HCT116 (cell line): ENCODE measurements at regions of chr12 and their contacts with region 1.

Region 1: DNA sequence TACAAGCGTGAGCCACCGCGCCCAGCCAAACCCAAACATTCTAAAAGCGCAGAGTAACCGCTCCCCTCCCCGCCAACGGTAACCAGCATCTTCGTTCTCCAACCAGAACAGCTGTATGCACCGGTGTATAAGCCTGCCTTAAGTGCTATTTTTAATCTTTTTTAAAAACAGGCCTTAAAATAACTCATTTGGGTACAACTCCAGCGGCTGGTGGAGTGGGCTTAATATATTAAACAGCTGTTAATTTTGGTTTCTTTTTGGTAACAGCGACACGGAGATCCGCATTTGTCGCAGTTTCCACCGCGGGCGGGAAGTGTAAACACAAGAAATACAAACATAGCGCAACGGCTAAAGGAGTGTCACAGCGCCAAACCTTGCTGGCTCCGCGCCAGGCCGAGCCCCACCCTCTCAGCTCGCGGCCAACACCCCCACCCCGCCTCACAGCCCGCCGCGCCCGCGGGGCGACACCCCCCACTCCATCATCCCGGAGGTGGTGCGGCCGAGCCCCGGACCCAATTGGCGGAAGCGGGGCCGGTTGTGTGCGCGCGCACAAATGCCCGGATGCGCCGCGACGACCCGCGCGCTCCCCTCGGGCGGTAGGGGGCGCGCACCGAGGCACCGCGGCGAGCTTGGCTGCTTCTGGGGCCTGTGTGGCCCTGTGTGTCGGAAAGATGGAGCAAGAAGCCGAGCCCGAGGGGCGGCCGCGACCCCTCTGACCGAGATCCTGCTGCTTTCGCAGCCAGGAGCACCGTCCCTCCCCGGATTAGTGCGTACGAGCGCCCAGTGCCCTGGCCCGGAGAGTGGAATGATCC is at the start of gene MDM2:
- DNase-seq: peak; percentile 77
- ATAC-seq: peak; percentile 87
- H3K4me3 ChIP-seq: peak within 1 kb of the TSS; percentile 95 to 96
- H3K27ac ChIP-seq: peak within 1 kb of the TSS; percentile 99
- H3K4me1 ChIP-seq: peaks cover 6 to 31% of the 10 kb centered on the region in 2 experiments; a peak in 3 of 4 replicates
- H3K27me3 ChIP-seq: no peaks in the 10 kb centered on the region
- CTCF ChIP-seq: peak in 2 of 3 experiments; percentile 67 to 84; a peak in 4 of 6 replicates
- POLR2A ChIP-seq: peak; percentile 72
- RAD21 ChIP-seq: peak; percentile 30; the same call in 1 of the 2 replicates
- total RNA-seq, gene MDM2: 170 TPM

Region 2: GRCh38 chr12:68331869-68332727 is 475.7 kb before region 1 on chr12 and contains the start of gene MDM1:
- CTCF ChIA-PET with region 1: interaction called, 3 read pairs
- POLR2A ChIA-PET with region 1: no interaction called
- RAD21 ChIA-PET with region 1: no interaction called
- intact Hi-C with region 1: loop called (anchors 5 kb)
- DNase-seq: peak; percentile 95
- ATAC-seq: peak; percentile 98
- H3K4me3 ChIP-seq: peak within 1 kb of the TSS; percentile 71 to 81
- H3K27ac ChIP-seq: peak within 1 kb of the TSS; percentile 24; the same call in 1 of the 2 replicates
- H3K4me1 ChIP-seq: peaks cover 7 to 13% of the 10 kb centered on the region in 2 experiments
- H3K27me3 ChIP-seq: no peaks in the 10 kb centered on the region
- CTCF ChIP-seq: no peak
- POLR2A ChIP-seq: peak; percentile 53
- RAD21 ChIP-seq: no peak
- total RNA-seq, gene MDM1: 10.0 TPM

Region 3: GRCh38 chr12:68745904-68746571 is 61.7 kb before region 1 on chr12 and contains the start of gene SLC35E3:
- CTCF ChIA-PET with region 1: interaction called, 3 read pairs
- POLR2A ChIA-PET with region 1: interaction called, 3 read pairs
- RAD21 ChIA-PET with region 1: interaction called in 1 of 2 experiments, 5 read pairs
- intact Hi-C with region 1: loop called (anchors 1 kb)
- DNase-seq: peak; percentile 68
- ATAC-seq: peak; percentile 97
- H3K4me3 ChIP-seq: peak within 1 kb of the TSS; percentile 68 to 87
- H3K27ac ChIP-seq: peak within 1 kb of the TSS; percentile 65
- H3K4me1 ChIP-seq: peaks cover 0 to 11% of the 10 kb centered on the region in 2 experiments; a peak in 1 of 4 replicates
- H3K27me3 ChIP-seq: no peaks in the 10 kb centered on the region
- CTCF ChIP-seq: no peak
- POLR2A ChIP-seq: peak; percentile 65
- RAD21 ChIP-seq: no peak
- total RNA-seq, gene SLC35E3: 4.9 TPM

Region 4: DNA sequence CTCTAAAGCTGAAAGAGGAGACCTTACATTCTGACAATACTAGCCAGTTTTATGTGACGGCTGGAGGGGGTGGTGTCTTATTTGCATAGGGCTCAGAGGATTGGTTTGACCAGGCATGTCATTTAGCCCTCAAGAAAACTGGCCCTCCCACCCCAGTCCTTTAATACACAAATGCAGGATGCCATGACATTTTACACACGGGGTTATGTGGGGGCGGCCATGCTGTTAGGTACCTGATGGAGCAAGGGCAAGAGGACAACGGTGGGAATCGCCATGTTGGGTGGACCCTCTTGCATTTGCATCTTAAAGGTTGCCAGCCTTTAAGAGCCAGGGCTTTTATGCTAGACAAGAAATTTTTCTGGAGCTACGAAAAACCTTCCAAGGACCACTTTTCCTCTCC is 23.5 kb after region 1 on chr12:
- CTCF ChIA-PET with region 1: interaction called, 12 read pairs
- POLR2A ChIA-PET with region 1: interaction called, 4 read pairs
- RAD21 ChIA-PET with region 1: no interaction called
- intact Hi-C with region 1: no loop called
- DNase-seq: no peak
- ATAC-seq: no peak
- H3K4me3 ChIP-seq: no peak overlapping the region
- H3K27ac ChIP-seq: no peak overlapping the region
- H3K4me1 ChIP-seq: no peaks in the 10 kb centered on the region
- H3K27me3 ChIP-seq: no peaks in the 10 kb centered on the region
- CTCF ChIP-seq: no peak
- POLR2A ChIP-seq: no peak
- RAD21 ChIP-seq: no peak